GM23248 (cell line): ENCODE measurements at regions of chr7 and their contacts with region 1.

Region 1: DNA sequence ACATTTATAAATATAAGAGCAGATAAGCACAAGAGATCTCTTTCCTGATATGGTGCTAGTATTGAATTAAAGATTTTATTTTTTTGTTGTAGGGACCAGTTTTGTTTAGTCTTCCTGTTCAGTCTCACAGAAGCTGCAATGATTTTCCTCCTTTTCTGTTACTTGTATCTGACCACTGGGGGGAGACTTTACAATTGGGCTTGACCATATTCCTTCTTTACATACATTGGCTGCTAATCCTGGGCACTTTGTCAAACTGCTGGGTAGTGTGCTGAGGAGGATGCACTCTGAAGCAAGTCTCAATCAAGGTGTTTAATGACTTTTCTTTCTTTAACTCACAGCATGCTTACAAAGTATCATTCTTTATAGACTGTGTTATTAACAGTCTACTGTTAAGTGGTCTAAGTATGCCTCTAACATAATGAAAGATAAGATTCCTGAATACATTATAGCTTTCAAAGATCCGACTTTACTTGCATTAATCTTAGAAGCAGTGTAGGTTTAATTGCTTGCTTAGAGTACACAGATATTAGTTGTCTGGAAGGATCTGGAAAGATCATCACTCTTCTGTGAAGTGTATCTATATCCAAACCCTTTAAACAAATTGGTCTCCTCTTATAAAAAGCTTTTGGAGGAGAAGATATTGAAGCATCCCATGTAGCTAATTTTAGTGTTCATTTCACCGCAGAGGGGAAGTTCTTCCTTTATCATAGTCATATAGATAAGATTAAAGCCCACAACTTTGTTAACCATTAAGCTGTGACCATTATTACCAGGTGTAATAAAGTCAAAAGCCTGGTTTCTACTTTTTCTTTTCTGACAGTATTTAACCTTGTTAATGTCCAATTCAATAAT is 3.1 kb downstream of the PALS2 start:
- DNase-seq: peak; percentile 81
- H3K4me3 ChIP-seq: no peak overlapping the region
- H3K27ac ChIP-seq: no peak overlapping the region
- H3K4me1 ChIP-seq: peaks cover 8% of the 10 kb centered on the region; the same call in 1 of the 2 replicates
- H3K27me3 ChIP-seq: no peaks in the 10 kb centered on the region

Region 2: GRCh38 chr7:24660546-24660945 is 84.1 kb after region 1 on chr7:
- in situ Hi-C with region 1: loop called (anchors 5 kb)
- DNase-seq: peak; percentile 34
- H3K4me3 ChIP-seq: no peak overlapping the region
- H3K27ac ChIP-seq: no peak overlapping the region
- H3K4me1 ChIP-seq: no peaks in the 10 kb centered on the region
- H3K27me3 ChIP-seq: no peaks in the 10 kb centered on the region

Region 3: GRCh38 chr7:25124465-25125136 is 548.2 kb after region 1 on chr7:
- in situ Hi-C with region 1: loop called (anchors 25 kb)
- DNase-seq: peak; percentile 65
- H3K4me3 ChIP-seq: peak overlapping the region; percentile 96
- H3K27ac ChIP-seq: peak overlapping the region; percentile 46
- H3K4me1 ChIP-seq: peaks cover 23% of the 10 kb centered on the region
- H3K27me3 ChIP-seq: no peaks in the 10 kb centered on the region

Region 4: DNA sequence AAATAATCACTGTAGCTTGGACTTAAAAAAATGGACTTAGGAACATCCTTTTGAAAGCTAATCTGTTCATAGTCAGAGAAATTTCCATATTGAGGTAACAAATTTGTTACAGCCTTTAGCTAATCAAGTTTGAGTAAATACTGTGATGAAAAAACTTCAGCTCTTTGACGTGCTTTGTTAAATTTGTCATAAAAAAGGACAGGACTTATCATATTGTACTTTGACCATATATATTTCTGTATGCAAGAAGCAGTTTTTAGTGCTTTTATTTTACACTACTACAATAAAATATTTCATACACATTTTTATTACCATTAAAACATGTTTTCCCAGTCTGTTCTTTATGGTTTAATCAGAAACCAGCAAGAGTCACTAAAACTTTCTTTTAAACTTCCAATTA is 563.1 kb after region 1 on chr7:
- in situ Hi-C with region 1: no loop called
- DNase-seq: no peak
- H3K4me3 ChIP-seq: no peak overlapping the region
- H3K27ac ChIP-seq: no peak overlapping the region
- H3K4me1 ChIP-seq: no peaks in the 10 kb centered on the region
- H3K27me3 ChIP-seq: no peaks in the 10 kb centered on the region